Left cardiac atrium (tissue), 4 donors: ENCODE measurements at regions of chr3 and their contacts with region 1.

Region 1: GRCh38 chr3:49171119-49171774 is at the start of gene KLHDC8B:
- DNase-seq: peak; percentile 91
- ATAC-seq: peak; percentile 92 to 93
- total RNA-seq, gene KLHDC8B: 35.6 to 55.9 TPM

Region 2: GRCh38 chr3:49135499-49135898 is 35.7 kb before region 1 on chr3:
- intact Hi-C with region 1: no loop called
- DNase-seq: no peak
- ATAC-seq: no peak

Region 3: DNA sequence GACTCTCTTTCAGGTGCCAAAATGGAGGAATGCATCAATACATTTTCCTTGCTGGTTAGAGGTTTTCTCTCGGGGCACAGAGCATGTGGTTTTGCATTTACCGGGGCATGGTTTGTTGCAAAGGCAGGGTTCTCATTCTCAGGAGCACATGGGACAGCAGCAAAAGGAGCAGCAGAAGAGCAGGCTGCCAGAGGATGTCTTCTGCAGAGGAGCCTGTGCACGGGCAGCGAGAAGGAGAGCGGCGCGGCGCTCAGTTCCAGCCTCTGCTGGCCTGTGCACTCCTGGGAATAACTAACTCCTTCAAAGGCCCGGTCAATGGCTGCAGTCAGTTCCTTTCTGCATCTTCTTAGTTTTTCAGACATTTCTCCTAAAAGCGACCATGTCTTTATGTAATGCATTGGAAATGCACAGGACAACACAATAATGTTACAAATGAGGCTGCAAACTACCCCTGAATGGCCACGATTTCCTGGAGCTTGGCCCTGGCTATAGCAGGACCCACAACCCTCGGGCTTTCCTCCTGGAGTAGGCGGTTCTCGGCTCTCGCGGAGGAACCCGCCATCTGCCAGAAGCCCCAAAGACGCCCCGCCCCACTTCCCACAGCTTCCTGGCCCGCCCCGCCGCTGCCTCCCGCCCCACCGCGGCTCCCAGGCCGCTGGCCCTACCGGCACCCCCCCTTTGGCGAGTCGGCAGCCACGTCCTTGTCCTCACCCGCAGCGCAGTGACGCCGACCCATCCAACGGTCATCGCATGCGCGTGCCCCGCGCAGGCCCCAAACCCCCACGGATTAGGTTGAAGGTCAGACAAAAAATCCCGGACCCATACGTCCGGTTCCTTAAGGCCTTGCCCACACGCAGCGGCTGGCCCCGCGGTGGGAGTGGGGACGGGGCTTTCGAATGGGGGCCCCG is 105.5 kb after region 1 on chr3 and contains the start of gene C3orf62:
- intact Hi-C with region 1: loop called (anchors 5 kb)
- DNase-seq: peak; percentile 95
- ATAC-seq: peak; percentile 96 to 97
- total RNA-seq, gene C3orf62: 3.2 to 3.4 TPM

Region 4: GRCh38 chr3:49295489-49296058 is 124.3 kb after region 1 on chr3:
- intact Hi-C with region 1: loop called in 1 of 2 experiments (anchors 5 kb)
- DNase-seq: no peak
- ATAC-seq: peak in 1 of 2 donors; percentile 11

Region 5: GRCh38 chr3:49454458-49454857 is 283.2 kb after region 1 on chr3:
- intact Hi-C with region 1: loop called in 1 of 2 experiments (anchors 2 kb)
- DNase-seq: no peak
- ATAC-seq: peak; percentile 62 to 68